HepG2 (cell line): ENCODE measurements at regions of chr16 and their contacts with region 1.

Region 1: GRCh38 chr16:25224731-25225319 is 8.1 kb downstream of the AQP8 start:
- DNase-seq: no peak
- ATAC-seq: no peak
- H3K4me3 ChIP-seq: no peak overlapping the region; a peak in 1 of 6 replicates
- H3K27ac ChIP-seq: no peak overlapping the region
- H3K4me1 ChIP-seq: peaks cover 60% of the 10 kb centered on the region
- H3K27me3 ChIP-seq: no peaks in the 10 kb centered on the region
- CTCF ChIP-seq: no peak
- EP300 ChIP-seq: no peak
- POLR2A ChIP-seq: no peak
- RAD21 ChIP-seq: no peak

Region 2: DNA sequence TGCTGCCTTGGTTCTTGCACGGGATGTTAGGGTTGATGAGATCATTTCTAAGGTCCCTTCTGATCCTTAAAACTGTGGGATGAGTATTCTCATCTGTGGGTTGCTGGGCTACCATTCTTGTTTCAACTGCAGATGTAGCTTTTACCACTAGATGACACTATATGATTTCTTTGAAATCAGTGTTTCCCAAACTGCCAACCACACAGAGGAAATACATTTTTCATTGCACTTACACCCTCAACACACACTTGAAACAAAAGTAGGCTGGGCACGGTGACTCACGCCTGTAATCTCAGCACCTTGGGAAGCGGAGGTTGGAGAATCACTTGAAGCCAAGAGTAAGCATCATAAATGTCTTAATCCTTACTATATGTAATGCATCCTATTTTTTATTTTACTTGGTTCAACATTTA is 98.0 kb before region 1 on chr16:
- CTCF ChIA-PET with region 1: interaction called, 48 read pairs
- POLR2A ChIA-PET with region 1: interaction called, 3 read pairs
- in situ Hi-C with region 1: no loop called
- intact Hi-C with region 1: loop called (anchors 1 kb)
- DNase-seq: peak; percentile 35
- ATAC-seq: peak; percentile 80
- H3K4me3 ChIP-seq: no peak overlapping the region
- H3K27ac ChIP-seq: no peak overlapping the region
- H3K4me1 ChIP-seq: no peaks in the 10 kb centered on the region
- H3K27me3 ChIP-seq: no peaks in the 10 kb centered on the region
- CTCF ChIP-seq: peak; percentile 83
- EP300 ChIP-seq: no peak
- POLR2A ChIP-seq: no peak
- RAD21 ChIP-seq: peak; percentile 84

Region 3: GRCh38 chr16:25143928-25144327 is 80.9 kb before region 1 on chr16:
- CTCF ChIA-PET with region 1: interaction called, 3 read pairs
- POLR2A ChIA-PET with region 1: no interaction called
- in situ Hi-C with region 1: loop called (anchors 5 kb)
- intact Hi-C with region 1: no loop called
- DNase-seq: no peak
- ATAC-seq: peak; percentile 77
- H3K4me3 ChIP-seq: no peak overlapping the region
- H3K27ac ChIP-seq: no peak overlapping the region
- H3K4me1 ChIP-seq: no peaks in the 10 kb centered on the region
- H3K27me3 ChIP-seq: no peaks in the 10 kb centered on the region
- CTCF ChIP-seq: peak; percentile 39
- EP300 ChIP-seq: no peak
- POLR2A ChIP-seq: no peak
- RAD21 ChIP-seq: peak; percentile 50; the same call in 1 of the 2 replicates

Region 4: DNA sequence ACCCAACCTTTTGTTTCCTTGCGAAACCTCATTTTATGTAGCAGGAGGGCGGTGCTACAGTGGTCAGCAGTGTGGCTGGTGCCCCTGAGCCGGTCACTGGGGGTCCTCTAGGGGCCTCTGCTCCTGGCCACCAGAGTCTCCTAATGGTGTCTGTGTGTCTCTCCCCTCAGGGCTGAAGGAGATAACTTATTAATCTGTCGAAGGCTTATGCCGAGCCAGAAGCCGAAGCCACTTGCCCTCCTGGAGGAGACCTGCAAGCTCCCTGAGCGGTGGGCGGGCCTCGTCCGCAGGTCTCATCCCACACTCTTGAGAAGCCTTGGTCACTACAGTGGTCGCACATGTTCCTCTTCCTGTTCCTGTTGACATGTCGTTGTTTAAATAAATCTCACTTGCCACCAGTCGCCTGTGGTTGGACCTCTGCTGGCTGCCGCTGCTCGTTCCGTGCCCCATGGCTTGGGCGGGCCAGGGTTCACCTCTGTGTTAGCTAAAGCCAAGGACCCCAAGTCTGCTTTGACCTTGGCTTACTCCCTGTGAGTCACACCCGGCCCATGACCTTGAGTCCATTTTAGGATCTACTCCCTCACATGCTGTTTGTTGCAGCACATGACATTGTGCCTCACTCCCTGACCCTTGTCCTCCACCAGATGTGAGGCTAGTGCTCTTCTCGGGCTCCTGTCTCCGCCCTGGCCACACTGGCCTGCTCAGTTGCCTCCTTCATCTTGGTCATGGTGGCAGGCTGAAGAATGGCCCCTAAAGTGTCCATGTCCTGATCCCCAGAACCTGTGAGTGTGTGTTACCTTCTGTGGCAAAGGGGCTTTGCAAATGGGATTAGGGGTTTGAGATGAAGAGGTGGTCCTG is 46.8 kb before region 1 on chr16:
- CTCF ChIA-PET with region 1: no interaction called
- POLR2A ChIA-PET with region 1: interaction called, 13 read pairs
- in situ Hi-C with region 1: no loop called
- intact Hi-C with region 1: loop called (anchors 2 kb)
- DNase-seq: peak; percentile 99
- ATAC-seq: peak; percentile 94
- H3K4me3 ChIP-seq: peak overlapping the region; percentile 30 to 51 (median 40)
- H3K27ac ChIP-seq: peak overlapping the region; percentile 85
- H3K4me1 ChIP-seq: peaks cover 40% of the 10 kb centered on the region
- H3K27me3 ChIP-seq: no peaks in the 10 kb centered on the region
- CTCF ChIP-seq: peak; percentile 49
- EP300 ChIP-seq: peak in 1 of 2 experiments; percentile 90; a peak in 3 of 4 replicates
- POLR2A ChIP-seq: peak; percentile 49 to 77; a peak in 2 of 4 replicates
- RAD21 ChIP-seq: peak; percentile 10

Region 5: DNA sequence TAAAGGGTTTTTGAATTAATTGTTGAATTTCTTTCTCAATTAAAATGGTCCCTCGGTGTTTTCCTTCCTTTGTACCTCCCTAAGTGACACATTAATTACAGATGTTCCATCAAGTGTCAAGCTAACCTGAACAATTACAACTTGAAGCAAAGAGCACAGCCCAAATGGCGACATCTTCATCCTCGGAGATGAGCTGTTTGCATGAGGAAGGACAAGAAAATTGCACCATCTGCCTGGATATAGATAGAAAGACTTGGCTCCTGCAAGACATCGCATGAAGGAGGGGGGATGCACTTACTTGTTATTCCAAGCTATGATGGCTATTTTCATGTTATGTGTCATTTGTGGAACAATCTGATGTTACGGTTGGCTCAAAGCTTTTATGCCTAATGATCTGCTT is 119.2 kb after region 1 on chr16:
- CTCF ChIA-PET with region 1: no interaction called
- POLR2A ChIA-PET with region 1: no interaction called
- in situ Hi-C with region 1: no loop called
- intact Hi-C with region 1: no loop called
- DNase-seq: no peak
- ATAC-seq: no peak
- H3K4me3 ChIP-seq: no peak overlapping the region
- H3K27ac ChIP-seq: no peak overlapping the region
- H3K4me1 ChIP-seq: no peaks in the 10 kb centered on the region
- H3K27me3 ChIP-seq: no peaks in the 10 kb centered on the region
- CTCF ChIP-seq: no peak
- EP300 ChIP-seq: no peak
- POLR2A ChIP-seq: no peak
- RAD21 ChIP-seq: no peak